ENCODE measurements at regions of chr1 and their contacts with region 1.

Region 1: DNA sequence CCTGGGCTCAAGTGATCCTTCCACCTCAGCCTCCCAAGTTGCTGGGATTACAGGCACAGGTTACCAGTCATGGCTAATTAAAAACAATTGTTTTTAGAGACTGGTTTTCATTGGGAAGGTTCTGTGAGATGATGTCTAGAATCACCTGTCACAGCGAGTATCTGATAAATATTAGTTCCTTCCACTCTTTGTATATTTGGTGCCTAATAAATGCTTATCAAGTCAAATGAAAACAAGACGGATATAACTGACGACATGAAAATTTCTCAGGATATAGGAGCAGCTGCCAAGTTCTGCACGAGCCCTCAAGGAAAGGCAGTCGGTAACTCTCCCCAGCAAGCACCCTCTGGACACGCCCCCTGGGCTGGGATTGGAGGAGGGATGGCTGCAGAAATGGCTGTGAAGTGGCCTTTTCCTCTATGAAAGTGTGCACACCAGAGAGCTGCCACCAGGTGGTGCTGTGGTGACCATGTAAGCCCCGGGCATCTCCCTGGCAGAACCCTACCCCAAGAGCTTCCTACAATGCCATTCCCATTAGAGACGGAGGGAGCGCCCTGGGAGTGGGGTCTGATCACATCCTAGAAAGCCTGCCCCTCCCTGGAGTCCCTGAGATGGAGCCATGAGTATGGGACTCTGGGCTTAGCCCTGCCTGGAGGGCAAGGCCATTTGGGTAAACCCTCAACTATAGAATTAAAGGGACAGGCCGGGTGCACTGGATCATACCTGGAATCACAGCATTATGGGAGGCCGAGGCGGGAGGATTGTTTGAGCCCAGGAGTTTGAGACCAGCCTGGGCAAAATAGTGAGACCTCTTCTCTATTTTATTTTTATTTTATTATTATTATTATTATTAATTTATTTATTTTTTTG is 50.9 kb downstream of the HTR6 start:
- DNase-seq: peak; percentile 90 to 95 (median 92)
- H3K4me3 ChIP-seq: no peak overlapping the region
- H3K27ac ChIP-seq: no peak overlapping the region
- H3K4me1 ChIP-seq: no peaks in the 10 kb centered on the region
- H3K27me3 ChIP-seq: no peaks in the 10 kb centered on the region

Region 2: DNA sequence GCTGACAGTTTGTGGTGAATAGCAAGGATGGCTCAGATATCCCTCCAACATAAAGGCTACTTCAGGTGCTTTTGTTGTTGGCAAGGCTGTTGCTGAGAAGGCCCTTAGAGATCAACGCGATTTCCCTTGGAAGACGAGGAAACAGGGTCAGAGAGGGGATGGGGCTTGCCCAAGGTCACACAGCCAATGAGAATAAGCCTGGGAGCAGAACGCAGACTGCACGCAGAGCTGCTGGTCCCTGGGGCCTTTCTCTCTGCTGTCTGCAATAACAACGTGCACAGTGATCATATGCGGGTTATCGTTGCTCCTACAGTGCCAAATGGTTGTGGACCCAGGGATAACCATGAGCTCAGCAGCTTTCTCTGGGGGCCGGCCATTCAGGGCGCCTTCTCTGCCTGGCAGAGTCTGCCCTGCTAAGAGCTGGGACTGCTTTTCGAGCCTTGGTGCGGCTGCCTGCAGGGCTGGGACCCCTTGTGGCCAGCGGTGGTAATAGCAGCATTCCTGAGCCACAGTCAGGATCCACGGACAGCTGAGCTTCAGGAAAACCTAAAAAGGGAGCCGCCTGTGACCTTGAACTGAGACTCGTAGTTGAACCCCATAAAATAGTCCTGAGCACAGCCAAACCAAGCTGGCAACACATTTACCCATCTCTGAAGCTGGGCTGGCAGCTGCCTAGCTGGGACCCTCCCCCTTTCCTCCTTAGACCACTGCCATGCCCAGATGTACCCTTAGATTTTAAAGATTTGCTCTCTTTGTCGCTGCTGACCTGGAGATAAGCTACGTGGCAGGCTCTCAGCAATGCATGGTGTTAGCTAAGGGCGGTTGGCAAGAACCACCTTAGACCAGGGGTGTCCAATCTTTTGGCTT is 11.1 kb before region 1 on chr1:
- CTCF ChIA-PET with region 1: interaction called, 10 read pairs
- POLR2A ChIA-PET with region 1: no interaction called
- DNase-seq: peak; percentile 36 to 54 (median 52)
- H3K4me3 ChIP-seq: no peak overlapping the region
- H3K27ac ChIP-seq: no peak overlapping the region
- H3K4me1 ChIP-seq: no peaks in the 10 kb centered on the region
- H3K27me3 ChIP-seq: no peaks in the 10 kb centered on the region

Region 3: DNA sequence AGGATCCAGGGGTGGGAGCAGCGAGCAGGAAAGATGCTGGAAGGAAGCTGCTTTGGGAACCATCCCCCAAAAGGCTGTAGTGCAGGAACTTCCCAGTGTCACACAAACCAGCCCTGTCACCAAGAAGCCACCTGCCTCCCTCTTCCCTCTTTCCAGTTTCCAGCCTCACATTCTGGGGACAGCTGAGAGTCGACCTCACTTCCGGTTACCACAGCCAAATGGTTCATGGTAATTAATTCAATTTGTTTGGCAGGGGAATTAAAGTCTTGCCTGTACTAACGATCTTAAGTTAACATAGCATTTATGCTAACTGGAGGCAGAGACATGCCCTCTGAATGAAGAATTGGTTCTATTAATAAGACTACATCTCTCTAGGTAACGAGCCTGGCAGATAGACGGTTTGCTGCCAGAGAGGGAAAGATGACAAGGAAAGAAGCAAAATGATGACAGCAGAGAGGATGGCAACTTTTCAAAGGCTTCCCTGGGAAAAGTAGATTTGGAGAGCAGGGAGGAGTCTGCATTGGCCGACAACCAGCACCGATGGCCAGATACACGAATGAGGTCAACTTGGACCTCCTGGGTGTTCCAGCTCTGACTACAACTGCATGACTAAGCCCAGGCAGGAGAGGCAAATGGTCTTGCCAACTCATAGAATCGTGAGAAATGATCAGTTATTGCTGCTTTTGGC is 20.0 kb after region 1 on chr1:
- CTCF ChIA-PET with region 1: no interaction called
- POLR2A ChIA-PET with region 1: no interaction called
- DNase-seq: no peak
- H3K4me3 ChIP-seq: no peak overlapping the region
- H3K27ac ChIP-seq: no peak overlapping the region
- H3K4me1 ChIP-seq: no peaks in the 10 kb centered on the region
- H3K27me3 ChIP-seq: no peaks in the 10 kb centered on the region

Measured in common myeloid progenitor, CD34-positive (primary cell).